Activated CD8-positive, alpha-beta T cell treated with anti-CD3 and anti-CD28 coated beads for 36 hours (primary cell): ENCODE measurements at regions of chr1 and their contacts with region 1.

Region 1: GRCh38 chr1:92367496-92367895 is 68.6 kb downstream of the RPAP2 start:
- DNase-seq: peak; percentile 33
- ATAC-seq: peak; percentile 68
- H3K4me3 Mint-ChIP-seq: no peak overlapping the region
- H3K27ac Mint-ChIP-seq: peak overlapping the region; percentile 65
- H3K4me1 Mint-ChIP-seq: peaks cover 49% of the 10 kb centered on the region
- H3K27me3 Mint-ChIP-seq: no peaks in the 10 kb centered on the region
- CTCF ChIP-seq: no peak

Region 2: DNA sequence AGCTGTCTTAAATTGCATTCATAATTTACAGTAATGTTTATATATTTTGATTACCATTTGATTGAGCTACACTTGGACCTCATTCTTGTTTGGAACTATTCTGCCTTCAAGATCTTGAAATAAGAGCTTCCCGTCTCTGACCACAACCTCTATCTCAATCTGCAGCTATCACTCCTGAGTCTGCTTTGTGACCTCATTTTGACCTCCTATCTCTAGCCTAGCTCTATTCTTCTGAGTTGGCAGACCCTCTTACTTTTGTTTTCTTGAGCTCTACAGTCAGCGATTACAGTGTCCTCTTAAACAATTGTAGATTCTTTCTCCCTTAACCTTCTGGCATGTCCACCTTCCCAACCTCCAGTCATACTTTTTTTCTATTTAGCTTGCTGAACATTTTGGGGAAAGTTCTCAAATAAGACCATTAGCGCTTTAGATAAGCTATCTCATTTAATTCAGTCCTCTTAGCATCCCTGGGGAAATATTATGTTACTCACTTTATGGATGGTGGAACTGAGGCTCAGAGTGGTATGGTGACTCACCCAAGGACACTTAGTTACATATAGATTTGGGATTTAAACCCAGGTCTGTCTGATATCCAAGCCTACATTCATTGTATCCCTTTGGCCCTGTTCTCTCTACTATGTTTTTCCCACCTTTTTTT is 49.5 kb before region 1 on chr1:
- CTCF ChIA-PET with region 1: interaction called, 7 read pairs
- POLR2A ChIA-PET with region 1: no interaction called
- intact Hi-C with region 1: loop called (anchors 5 kb)
- DNase-seq: peak; percentile 28
- ATAC-seq: peak; percentile 72
- H3K4me3 Mint-ChIP-seq: no peak overlapping the region
- H3K27ac Mint-ChIP-seq: peak overlapping the region; percentile 70
- H3K4me1 Mint-ChIP-seq: peaks cover 56% of the 10 kb centered on the region
- H3K27me3 Mint-ChIP-seq: no peaks in the 10 kb centered on the region
- CTCF ChIP-seq: no peak

Region 3: DNA sequence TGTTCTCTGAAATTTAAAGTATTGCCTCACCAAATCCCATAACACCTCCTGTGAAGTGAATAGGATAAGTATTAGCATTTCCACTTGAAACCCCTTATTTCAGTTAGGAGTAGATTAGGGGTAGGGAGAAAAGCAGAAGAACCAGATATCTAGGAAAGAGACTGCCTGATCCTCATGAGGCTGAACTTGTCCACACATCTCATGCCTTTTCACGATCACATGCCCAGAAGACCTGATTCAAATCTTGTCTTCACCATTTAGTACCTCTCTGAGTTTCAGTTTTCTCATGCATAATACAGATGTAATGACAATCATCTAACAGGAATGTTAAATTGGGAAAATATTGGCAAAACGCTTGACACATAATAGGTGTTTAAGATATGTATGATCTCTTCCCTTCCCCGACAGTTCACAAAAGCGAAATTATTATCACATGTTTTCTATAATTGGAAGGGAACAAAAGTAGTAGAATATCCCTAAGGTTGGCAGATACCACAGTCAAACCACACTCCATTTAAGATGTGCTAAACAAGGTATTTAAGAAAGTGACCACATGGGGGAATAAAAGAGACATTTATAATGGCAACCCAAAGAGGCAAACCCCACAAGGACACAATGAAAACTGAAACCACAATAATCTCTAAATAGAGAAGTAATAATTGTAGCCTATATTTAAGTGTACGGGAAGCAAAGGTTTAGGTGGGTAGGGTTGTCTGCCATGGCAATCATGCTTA is 94.0 kb after region 1 on chr1:
- CTCF ChIA-PET with region 1: no interaction called
- POLR2A ChIA-PET with region 1: no interaction called
- intact Hi-C with region 1: loop called (anchors 5 kb)
- DNase-seq: no peak
- ATAC-seq: no peak
- H3K4me3 Mint-ChIP-seq: no peak overlapping the region
- H3K27ac Mint-ChIP-seq: no peak overlapping the region
- H3K4me1 Mint-ChIP-seq: peaks cover 50% of the 10 kb centered on the region
- H3K27me3 Mint-ChIP-seq: no peaks in the 10 kb centered on the region
- CTCF ChIP-seq: peak; percentile 23